H1 (cell line): ENCODE measurements at regions of chr19 and their contacts with region 1.

Region 1: GRCh38 chr19:21835810-21836444 is at the start of gene ZNF43:
- DNase-seq: peak; percentile 88
- H3K4me3 ChIP-seq: peak within 1 kb of the TSS; percentile 47 to 91 (median 75)
- H3K27ac ChIP-seq: peak within 1 kb of the TSS; percentile 99
- H3K4me1 ChIP-seq: no peaks in the 10 kb centered on the region
- H3K27me3 ChIP-seq: no peaks in the 10 kb centered on the region
- CTCF ChIP-seq: no peak
- EP300 ChIP-seq: no peak
- POLR2A ChIP-seq: peak; percentile 97 to 99
- RAD21 ChIP-seq: 0 out of 4 replicates have a peak, but pooled peaks of 1 of the 2 experiments have one; percentile 1
- total RNA-seq, gene ZNF43: 50.0 and 53.1 TPM in 2 replicates

Region 2: DNA sequence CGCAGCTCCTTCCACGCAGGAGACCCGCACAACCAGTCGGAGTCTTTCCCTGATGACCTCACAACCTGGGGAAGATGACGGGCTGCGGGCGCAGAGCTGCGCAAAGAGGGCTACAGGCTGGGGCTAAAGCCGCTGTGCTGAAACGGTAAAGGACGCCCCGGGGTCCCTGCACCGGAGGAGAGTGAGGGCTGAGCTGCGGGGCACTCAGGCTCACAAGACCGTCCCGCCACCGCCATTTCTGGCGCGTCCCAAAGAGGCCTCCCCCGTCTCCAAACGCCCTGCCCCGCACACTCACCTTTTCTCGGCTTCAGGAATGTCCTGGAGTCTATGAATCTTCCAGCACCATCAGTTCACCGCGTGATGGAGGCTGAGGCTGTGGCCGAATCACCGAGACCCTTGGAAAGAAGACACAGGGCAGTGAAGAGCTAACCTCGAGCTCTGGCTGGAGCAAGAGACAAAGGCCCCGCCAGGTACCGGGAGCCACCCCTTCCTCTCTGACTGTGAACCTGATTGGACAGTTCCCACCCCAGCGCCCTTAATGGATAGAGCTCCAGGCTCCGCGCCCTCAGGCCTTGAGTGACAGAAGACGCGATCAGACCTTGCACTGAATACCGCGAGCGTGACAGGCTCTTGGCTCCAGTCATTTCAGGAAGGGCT is 372.4 kb before region 1 on chr19:
- CTCF ChIA-PET with region 1: no interaction called
- POLR2A ChIA-PET with region 1: interaction called, 10 read pairs
- DNase-seq: peak; percentile 75 to 81
- H3K4me3 ChIP-seq: peak overlapping the region; percentile 91 to 100 (median 96)
- H3K27ac ChIP-seq: peak overlapping the region; percentile 85
- H3K4me1 ChIP-seq: no peaks in the 10 kb centered on the region; a peak in 1 of 7 replicates
- H3K27me3 ChIP-seq: no peaks in the 10 kb centered on the region
- CTCF ChIP-seq: no peak
- EP300 ChIP-seq: no peak
- POLR2A ChIP-seq: peak; percentile 90 to 99
- RAD21 ChIP-seq: no peak

Region 3: DNA sequence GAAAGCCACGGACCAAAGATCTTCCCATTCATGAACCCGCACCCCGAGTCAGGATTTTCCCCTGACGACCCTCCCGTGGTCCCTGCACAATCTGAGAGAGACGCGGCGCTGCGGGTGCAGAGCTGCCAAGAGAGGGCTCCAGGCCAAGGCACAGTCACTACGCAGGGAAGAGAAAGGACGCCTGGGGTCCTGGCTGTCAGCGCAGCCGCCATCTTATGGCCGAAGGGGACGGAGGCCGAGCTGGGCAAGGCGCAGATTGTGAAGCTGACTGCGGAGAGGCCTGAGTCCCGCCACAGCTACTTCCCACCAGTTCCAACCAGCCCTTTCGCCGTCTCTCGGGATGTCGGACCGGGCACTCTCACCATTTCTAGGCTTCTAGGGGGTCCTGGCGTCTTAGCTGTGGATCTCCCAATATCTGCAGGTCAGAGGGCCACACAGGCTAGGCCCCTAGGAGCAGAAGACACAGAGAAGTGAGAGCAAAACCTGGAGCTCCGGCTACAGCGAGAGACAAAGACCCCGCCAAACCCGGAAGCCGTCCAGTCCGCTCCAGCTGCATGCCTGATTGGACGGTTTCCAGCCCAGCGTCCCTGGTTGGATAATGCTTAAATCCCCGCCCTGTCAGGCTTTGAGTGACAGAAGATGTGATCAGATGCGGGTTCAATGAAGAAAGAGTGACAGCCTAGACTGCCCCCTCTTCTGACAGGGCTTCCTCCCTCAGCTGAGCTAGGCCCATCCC is 68.7 kb before region 1 on chr19 and contains the start of gene ZNF100:
- CTCF ChIA-PET with region 1: no interaction called
- POLR2A ChIA-PET with region 1: interaction called, 23 read pairs
- DNase-seq: peak; percentile 79 to 87
- H3K4me3 ChIP-seq: peak within 1 kb of the TSS; percentile 87 to 99 (median 98)
- H3K27ac ChIP-seq: peak within 1 kb of the TSS; percentile 96
- H3K4me1 ChIP-seq: no peaks in the 10 kb centered on the region; a peak in 1 of 7 replicates
- H3K27me3 ChIP-seq: no peaks in the 10 kb centered on the region
- CTCF ChIP-seq: no peak
- EP300 ChIP-seq: no peak
- POLR2A ChIP-seq: peak; percentile 83 to 93
- RAD21 ChIP-seq: no peak; a peak in 1 of 4 replicates
- total RNA-seq, gene ZNF100: 30.8 and 34.5 TPM in 2 replicates

Region 4: DNA sequence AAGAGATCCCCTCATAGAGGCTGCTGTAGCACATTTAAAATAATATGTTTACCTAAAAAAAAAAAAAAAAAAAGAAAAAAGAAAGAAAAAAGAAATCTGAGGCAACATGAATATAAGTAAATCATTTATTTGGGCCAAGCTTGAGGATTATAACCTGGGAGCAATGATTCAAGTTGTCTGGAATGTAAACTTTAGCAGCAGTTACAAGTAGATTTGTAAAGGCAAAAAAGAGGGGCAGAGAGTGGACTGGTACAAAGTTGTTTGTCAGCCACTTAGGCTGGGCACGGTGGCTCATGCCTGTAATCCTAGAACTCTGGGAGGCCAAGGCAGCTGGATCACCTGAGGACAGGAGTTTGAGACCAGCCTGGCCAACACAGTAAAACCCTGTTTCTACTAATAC is 11.2 kb before region 1 on chr19:
- CTCF ChIA-PET with region 1: interaction called, 3 read pairs
- POLR2A ChIA-PET with region 1: interaction called, 93 read pairs
- DNase-seq: no peak
- H3K4me3 ChIP-seq: no peak overlapping the region
- H3K27ac ChIP-seq: no peak overlapping the region
- H3K4me1 ChIP-seq: no peaks in the 10 kb centered on the region
- H3K27me3 ChIP-seq: no peaks in the 10 kb centered on the region
- CTCF ChIP-seq: no peak
- EP300 ChIP-seq: no peak
- POLR2A ChIP-seq: no peak
- RAD21 ChIP-seq: no peak

Region 5: GRCh38 chr19:21878646-21879045 is 42.7 kb after region 1 on chr19:
- CTCF ChIA-PET with region 1: no interaction called
- POLR2A ChIA-PET with region 1: no interaction called
- DNase-seq: no peak
- H3K4me3 ChIP-seq: no peak overlapping the region
- H3K27ac ChIP-seq: no peak overlapping the region
- H3K4me1 ChIP-seq: no peaks in the 10 kb centered on the region
- H3K27me3 ChIP-seq: no peaks in the 10 kb centered on the region
- CTCF ChIP-seq: no peak
- EP300 ChIP-seq: no peak
- POLR2A ChIP-seq: no peak
- RAD21 ChIP-seq: no peak

Region 6: DNA sequence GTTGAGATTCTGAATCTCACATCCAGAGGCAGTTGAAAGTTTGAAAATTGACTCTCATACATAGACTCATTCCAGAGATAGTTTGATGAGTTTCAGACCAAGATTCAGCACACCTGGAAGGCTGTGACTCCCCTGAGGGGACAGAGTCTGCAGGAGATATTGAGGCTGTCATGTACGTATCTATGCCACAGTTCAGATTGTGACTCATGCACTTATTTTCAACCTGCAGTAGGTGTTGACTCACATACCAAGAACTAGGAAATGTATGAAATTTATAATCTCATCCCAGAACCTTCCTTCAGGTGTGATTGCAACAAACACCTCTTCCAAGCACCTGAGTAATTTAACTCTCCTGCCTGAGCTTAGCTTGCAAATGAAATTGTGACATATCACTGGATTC is 64.4 kb after region 1 on chr19:
- CTCF ChIA-PET with region 1: no interaction called
- POLR2A ChIA-PET with region 1: no interaction called
- DNase-seq: no peak
- H3K4me3 ChIP-seq: no peak overlapping the region
- H3K27ac ChIP-seq: no peak overlapping the region
- H3K4me1 ChIP-seq: no peaks in the 10 kb centered on the region
- H3K27me3 ChIP-seq: no peaks in the 10 kb centered on the region
- CTCF ChIP-seq: no peak
- EP300 ChIP-seq: no peak
- POLR2A ChIP-seq: no peak
- RAD21 ChIP-seq: no peak

Region 7: GRCh38 chr19:21921691-21922180 is 85.8 kb after region 1 on chr19:
- CTCF ChIA-PET with region 1: no interaction called
- POLR2A ChIA-PET with region 1: no interaction called
- DNase-seq: no peak
- H3K4me3 ChIP-seq: no peak overlapping the region
- H3K27ac ChIP-seq: no peak overlapping the region
- H3K4me1 ChIP-seq: no peaks in the 10 kb centered on the region
- H3K27me3 ChIP-seq: no peaks in the 10 kb centered on the region
- CTCF ChIP-seq: no peak
- EP300 ChIP-seq: no peak
- POLR2A ChIP-seq: no peak
- RAD21 ChIP-seq: no peak